ENCODE measurements at regions of chr4 and their contacts with region 1.

Region 1: GRCh38 chr4:55554453-55555030 is 7.8 kb upstream of the CLOCK start:
- DNase-seq: no peak
- H3K4me3 ChIP-seq: no peak overlapping the region
- H3K27ac ChIP-seq: no peak overlapping the region
- H3K4me1 ChIP-seq: peaks cover 0 to 15% (median 4%) of the 10 kb centered on the region in 4 donors
- H3K27me3 ChIP-seq: no peaks in the 10 kb centered on the region
- CTCF ChIP-seq: peak in 3 of 4 experiments; percentile 8 to 44 (median 20)
- EP300 ChIP-seq: no peak
- POLR2A ChIP-seq: no peak

Region 2: DNA sequence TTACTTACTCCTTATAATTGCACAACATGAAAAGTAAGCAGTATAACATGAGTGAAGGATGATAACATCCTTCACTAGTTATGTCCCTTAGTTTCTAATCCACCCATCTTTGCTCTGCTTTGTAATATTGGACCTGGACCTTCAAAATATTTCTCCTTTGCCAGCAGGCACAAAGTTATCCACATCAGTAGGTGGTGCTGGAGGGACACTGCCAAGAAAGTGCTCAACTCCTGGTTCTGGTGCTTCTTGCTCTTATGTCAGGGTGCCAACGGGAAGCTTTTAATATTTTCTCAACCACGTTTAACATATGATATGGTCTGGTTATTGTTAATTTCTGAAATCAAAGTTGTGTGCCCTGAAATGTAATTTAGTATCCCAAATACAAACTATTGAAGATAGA is 109.7 kb before region 1 on chr4:
- intact Hi-C with region 1: loop called (anchors 10 kb)
- DNase-seq: no peak
- H3K4me3 ChIP-seq: no peak overlapping the region
- H3K27ac ChIP-seq: no peak overlapping the region
- H3K4me1 ChIP-seq: peaks cover 0 to 5% (median 2%) of the 10 kb centered on the region in 4 donors
- H3K27me3 ChIP-seq: no peaks in the 10 kb centered on the region
- CTCF ChIP-seq: no peak
- EP300 ChIP-seq: no peak
- POLR2A ChIP-seq: no peak